ENCODE measurements at regions of chr5 and their contacts with region 1.

Region 1: DNA sequence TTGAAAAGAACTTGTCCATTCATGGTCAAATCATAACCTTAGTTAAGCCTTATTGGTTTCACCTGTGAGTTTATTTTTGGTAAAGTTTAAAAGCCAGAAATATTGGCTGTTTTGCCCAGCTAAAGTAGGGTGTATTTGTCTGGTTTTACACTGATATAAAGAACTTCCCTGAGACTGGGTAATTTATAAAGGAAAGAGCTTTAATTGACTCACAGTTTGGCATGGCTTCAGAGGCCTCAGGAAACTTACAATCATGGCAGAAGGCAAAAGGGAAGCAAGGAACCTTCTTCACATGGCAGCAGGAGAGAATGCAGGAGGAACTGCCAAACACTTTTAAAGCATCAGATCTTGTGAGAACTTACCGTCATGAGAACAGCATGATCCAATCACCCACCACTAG is 55.3 kb downstream of the JAKMIP2 start:
- DNase-seq: no peak
- H3K4me3 ChIP-seq: no peak overlapping the region
- H3K27ac ChIP-seq: no peak overlapping the region
- H3K4me1 ChIP-seq: no peaks in the 10 kb centered on the region; a peak in 2 of 7 replicates
- H3K27me3 ChIP-seq: no peaks in the 10 kb centered on the region
- CTCF ChIP-seq: no peak
- EP300 ChIP-seq: no peak
- POLR2A ChIP-seq: no peak
- RAD21 ChIP-seq: no peak

Region 2: DNA sequence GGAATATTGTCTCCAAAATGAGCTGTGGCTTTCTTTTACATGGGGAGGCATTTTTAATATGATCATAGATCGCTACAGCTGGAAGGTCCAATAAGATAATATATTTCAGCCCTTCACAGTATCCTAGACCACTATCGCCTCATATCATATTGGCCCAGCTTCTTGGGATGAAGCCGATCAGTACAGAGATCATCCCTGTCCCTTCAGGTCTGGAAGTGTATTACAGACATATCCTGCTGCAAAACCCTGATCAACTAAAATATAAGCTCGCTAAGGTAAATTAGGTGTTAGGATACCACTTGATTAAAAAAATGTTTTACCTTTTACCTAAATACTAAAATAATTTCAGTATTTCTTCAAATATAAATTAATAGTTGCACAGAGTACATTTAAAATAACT is 13.7 kb after region 1 on chr5:
- CTCF ChIA-PET with region 1: interaction called, 12 read pairs
- POLR2A ChIA-PET with region 1: interaction called, 7 read pairs
- DNase-seq: no peak
- H3K4me3 ChIP-seq: no peak overlapping the region
- H3K27ac ChIP-seq: no peak overlapping the region
- H3K4me1 ChIP-seq: no peaks in the 10 kb centered on the region
- H3K27me3 ChIP-seq: no peaks in the 10 kb centered on the region
- CTCF ChIP-seq: peak in 1 of 3 experiments; percentile 17; a peak in 1 of 4 replicates
- EP300 ChIP-seq: no peak
- POLR2A ChIP-seq: no peak
- RAD21 ChIP-seq: no peak